BJ (cell line): ENCODE measurements at regions of chr6 and their contacts with region 1.

Region 1: GRCh38 chr6:43774776-43775534 is 4.9 kb downstream of the VEGFA start:
- DNase-seq: no peak
- H3K4me3 ChIP-seq: peak overlapping the region; percentile 94
- H3K27me3 ChIP-seq: no peaks in the 10 kb centered on the region
- CTCF ChIP-seq: peak; percentile 97

Region 2: DNA sequence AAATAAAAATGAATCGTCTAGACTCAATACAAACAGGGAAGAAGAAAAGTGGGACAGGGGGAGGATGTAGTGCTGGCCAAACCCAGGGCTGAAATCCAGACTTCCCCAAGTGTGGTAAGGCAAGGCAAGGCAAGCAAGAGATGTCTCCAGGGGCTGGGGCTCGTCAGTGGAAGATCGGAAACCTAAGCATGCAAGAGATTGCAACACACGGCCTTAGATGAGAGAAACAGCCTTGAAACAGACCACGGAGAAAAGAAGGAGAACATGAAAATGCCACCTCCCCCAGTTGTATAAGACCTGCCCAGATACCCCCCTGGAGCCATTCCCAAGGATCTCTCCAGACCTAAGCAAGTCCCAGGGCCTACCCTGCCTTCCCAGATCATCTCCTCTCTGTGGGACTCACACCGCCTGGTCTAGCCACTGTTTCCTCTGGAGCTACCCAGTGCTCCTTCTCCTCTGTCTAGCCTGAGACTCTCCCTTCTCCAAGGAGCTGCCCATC is 15.1 kb after region 1 on chr6:
- CTCF ChIA-PET with region 1: interaction called, 20 read pairs
- POLR2A ChIA-PET with region 1: interaction called, 6 read pairs
- DNase-seq: no peak
- H3K4me3 ChIP-seq: no peak overlapping the region
- H3K27me3 ChIP-seq: no peaks in the 10 kb centered on the region; the same call in 1 of the 2 replicates
- CTCF ChIP-seq: no peak

Region 3: DNA sequence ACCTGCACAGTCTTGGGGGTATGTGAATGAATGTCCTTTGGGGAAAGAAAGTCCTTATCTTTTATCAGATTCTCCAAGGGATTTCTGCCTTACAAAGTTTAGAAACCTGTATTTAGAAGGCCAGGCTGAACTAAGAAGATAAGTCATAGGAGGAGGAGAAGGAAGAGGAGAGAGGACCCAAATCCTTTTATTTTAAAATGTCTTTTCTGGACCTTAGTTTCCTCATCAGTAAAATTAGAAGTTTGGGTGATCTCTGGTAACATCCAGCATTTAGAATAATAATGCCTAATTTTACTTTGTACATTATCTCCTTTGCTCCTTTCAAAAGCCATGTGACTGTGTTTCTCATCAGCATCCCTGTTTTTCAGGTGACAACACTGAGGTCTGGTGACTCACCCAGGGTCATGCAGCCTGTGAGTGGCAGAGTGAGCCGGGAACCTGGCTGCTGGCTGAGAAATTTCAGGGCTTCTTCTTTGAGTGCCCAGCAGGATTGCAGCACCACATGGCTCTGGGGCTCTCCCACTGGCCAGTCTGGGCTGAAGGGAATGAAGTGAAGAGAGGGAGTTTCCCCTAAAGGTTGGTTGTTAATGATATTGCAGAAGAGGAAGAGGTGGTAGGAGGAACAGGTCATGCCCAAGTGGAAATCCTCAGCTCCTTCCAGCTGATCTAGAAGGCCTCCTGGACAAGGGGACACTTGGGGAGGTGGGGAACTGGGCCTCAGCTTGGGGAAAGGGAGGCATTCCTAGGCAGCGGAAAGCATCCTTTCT is 29.0 kb after region 1 on chr6:
- CTCF ChIA-PET with region 1: interaction called, 12 read pairs
- POLR2A ChIA-PET with region 1: interaction called, 3 read pairs
- DNase-seq: no peak
- H3K4me3 ChIP-seq: no peak overlapping the region
- H3K27me3 ChIP-seq: no peaks in the 10 kb centered on the region; the same call in 1 of the 2 replicates
- CTCF ChIP-seq: no peak

Region 4: DNA sequence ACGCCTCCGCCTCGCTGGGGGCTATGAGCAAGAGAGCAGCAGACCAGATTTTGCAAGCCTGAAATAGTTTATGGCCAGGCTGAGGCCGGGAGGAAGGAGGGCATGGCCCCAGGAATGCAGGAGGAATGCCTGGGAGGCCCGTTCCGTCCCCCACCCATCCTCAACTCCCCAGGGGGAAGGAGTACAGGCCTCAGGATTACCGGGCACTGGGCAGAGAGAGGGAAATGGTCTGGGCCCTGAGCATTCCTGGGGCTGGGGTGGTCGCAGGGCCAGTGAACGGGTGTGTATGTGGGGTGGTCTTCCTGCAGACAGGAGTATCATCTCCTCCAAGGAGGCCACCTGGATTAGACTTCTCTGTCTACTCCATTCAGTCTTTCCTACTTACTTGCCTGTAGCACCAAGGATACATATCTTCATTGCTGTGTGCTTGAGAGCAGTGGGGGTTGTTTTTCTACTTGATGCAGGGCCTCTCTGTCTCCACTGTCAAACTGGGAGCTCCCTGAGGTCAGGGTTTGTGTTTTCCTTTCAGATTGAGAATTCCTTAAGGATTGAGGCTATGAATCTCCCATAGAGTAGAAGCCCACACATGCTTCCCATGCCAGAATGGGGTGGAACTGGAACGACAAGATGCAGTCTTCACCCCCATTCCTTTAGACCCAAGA is 76.4 kb after region 1 on chr6:
- CTCF ChIA-PET with region 1: interaction called, 13 read pairs
- POLR2A ChIA-PET with region 1: no interaction called
- DNase-seq: peak; percentile 64
- H3K4me3 ChIP-seq: no peak overlapping the region
- H3K27me3 ChIP-seq: no peaks in the 10 kb centered on the region
- CTCF ChIP-seq: no peak

Region 5: GRCh38 chr6:43951063-43951755 is 176.3 kb after region 1 on chr6:
- CTCF ChIA-PET with region 1: interaction called, 58 read pairs
- POLR2A ChIA-PET with region 1: interaction called, 3 read pairs
- DNase-seq: no peak
- H3K4me3 ChIP-seq: no peak overlapping the region
- H3K27me3 ChIP-seq: no peaks in the 10 kb centered on the region; the same call in 1 of the 2 replicates
- CTCF ChIP-seq: peak; percentile 64

Region 6: DNA sequence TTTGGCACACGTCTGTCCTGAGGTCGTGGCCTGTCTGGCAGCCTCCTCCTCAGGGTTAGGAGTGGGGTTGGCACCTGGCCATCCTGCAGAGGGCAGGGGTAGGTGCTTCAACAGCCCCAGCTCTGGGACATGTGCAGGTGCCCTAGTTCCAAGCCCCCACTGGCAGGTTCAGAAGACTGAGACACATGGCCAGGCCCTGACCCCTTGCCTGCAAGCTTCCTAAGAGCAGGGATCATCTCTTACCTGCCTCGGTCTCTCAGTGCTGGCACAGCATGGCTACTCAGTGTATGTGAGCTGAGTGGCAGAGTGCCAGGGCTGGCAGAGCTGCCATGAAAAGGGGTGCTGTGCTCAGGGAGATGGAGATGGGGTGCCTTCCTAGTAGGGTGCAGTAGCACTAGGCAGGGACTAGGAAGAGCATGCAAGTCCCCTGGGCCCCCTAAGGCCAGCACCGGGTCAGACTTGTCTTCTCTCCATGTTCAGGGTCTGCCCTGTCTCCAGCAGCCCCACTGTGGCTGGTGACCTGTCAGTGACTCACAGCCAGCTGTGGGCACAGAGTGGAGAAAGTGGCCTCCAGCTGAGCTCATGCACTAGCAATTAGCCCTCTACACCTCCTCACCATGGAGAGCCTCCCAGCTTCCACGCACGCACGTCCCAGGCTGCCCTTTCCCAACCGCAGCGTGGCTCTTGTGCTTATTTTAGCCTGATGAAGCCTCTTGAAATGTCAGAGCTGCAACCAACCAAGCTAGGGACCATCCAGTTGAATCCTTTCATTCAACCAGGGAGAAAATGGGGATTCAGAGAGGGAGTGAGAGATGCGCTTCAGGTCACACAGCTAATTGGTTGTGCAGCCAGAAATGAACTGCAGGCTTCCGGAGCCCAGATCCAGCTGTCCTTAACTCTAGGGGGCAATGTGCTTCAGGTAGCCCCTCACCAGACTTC is 235.7 kb after region 1 on chr6:
- CTCF ChIA-PET with region 1: interaction called, 21 read pairs
- POLR2A ChIA-PET with region 1: interaction called, 9 read pairs
- DNase-seq: peak; percentile 78
- H3K4me3 ChIP-seq: no peak overlapping the region
- H3K27me3 ChIP-seq: no peaks in the 10 kb centered on the region
- CTCF ChIP-seq: no peak